Mucosa of descending colon (tissue), 3 donors: ENCODE measurements at regions of chrX and their contacts with region 1.

Region 1: GRCh38 chrX:115642895-115643530 is 82.0 kb downstream of the PLS3 start:
- DNase-seq: peak in 1 of 3 donors; percentile 57
- ATAC-seq: peak; percentile 67
- H3K4me3 ChIP-seq: no peak overlapping the region
- H3K4me1 ChIP-seq: no peaks in the 10 kb centered on the region
- CTCF ChIP-seq: peak; percentile 38

Region 2: GRCh38 chrX:115324194-115324593 is 318.8 kb before region 1 on chrX:
- intact Hi-C with region 1: loop called in 1 of 2 experiments (anchors 10 kb)
- DNase-seq: peak in 2 of 3 donors; percentile 23 to 32
- ATAC-seq: no peak
- H3K4me3 ChIP-seq: no peak overlapping the region
- H3K4me1 ChIP-seq: no peaks in the 10 kb centered on the region
- CTCF ChIP-seq: no peak

Region 3: DNA sequence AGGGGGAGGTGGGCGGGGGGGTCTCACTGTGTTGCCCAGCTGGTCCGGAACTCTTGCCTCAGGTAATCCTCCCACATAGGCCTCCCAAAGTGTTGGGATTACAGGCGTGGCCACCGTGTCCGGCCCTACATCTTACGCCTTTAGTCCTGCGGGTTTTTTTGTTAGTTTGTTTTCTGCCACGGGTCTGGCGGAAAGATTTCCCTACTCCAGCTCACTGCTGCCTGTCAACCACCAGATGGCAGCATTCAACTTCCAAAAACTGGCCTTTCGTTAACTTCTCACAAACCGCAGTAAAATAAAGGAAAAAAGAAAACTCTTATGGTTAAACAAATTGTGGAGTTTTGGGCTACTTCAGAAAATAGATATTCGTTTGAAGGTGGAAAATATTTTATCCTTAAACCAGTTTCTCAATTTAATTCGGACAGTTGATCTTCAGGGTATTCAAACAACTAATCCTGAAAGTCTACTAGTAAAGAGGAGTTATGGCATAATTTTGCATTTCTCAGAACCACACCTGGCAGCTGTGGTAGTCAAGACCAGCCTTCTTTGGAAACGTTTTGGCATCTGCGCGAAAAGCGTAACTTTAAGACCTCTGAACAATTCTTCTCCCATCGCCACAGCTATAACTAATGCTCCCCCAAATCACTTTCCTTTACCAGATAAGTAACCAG is 312.4 kb before region 1 on chrX:
- intact Hi-C with region 1: loop called (anchors 5 to 10 kb)
- DNase-seq: peak in 1 of 3 donors; percentile 9
- ATAC-seq: peak; percentile 61
- H3K4me3 ChIP-seq: no peak overlapping the region
- H3K4me1 ChIP-seq: no peaks in the 10 kb centered on the region
- CTCF ChIP-seq: peak; percentile 40

Region 4: DNA sequence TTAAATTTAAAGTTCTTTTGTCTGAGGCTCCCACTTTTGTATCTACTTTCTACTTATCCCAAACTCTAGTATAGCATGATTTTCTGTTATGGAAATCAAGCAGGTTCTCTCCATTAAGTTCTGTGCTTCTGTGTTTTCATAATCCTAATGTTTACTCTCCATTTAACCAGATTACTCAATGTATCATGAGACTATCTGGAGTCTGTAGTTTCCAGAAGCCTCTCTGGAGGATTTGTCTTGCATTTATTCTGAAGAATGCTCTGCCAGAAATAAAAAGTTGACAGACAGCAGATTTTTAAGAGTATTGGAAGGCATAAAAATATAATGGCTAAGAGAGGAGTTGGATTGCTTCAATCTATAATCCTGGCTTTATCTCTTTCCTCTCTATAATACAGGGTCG is 121.3 kb before region 1 on chrX:
- intact Hi-C with region 1: no loop called
- DNase-seq: no peak
- ATAC-seq: no peak
- H3K4me3 ChIP-seq: no peak overlapping the region
- H3K4me1 ChIP-seq: no peaks in the 10 kb centered on the region
- CTCF ChIP-seq: no peak